Aorta (tissue), 5 donors: ENCODE measurements at regions of chr4 and their contacts with region 1.

Region 1: GRCh38 chr4:170675568-170676262 is 586.0 kb upstream of the AADAT start:
- DNase-seq: no peak
- ATAC-seq: no peak
- H3K4me3 ChIP-seq: no peak overlapping the region
- H3K27ac ChIP-seq: no peak overlapping the region
- H3K4me1 ChIP-seq: peaks cover 3 to 8% of the 10 kb centered on the region in 2 donors
- H3K27me3 ChIP-seq: no peaks in the 10 kb centered on the region

Region 2: DNA sequence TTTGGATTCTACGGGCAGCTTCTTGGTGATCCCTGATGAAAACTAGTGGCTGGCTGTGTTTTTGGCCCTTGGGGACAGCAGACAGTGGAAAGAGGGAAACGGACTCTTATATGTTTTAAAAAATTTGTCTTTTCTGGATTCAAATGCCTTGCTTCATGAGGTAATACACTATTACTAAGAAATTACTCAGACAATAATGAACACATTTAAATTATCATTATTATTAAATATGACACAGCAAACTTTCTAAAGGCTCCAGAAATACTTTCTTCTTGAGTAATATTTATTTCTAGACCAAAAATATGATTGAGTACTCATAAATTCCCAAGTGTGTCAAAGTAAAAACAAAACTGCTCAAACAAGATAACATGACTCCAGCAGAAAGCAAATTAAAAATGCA is 65.3 kb before region 1 on chr4:
- intact Hi-C with region 1: loop called in 1 of 2 experiments (anchors 10 kb)
- DNase-seq: no peak
- ATAC-seq: no peak
- H3K4me3 ChIP-seq: no peak overlapping the region
- H3K27ac ChIP-seq: peak overlapping the region in 1 of 2 donors; percentile 57
- H3K4me1 ChIP-seq: peaks cover 0 to 2% of the 10 kb centered on the region in 2 donors
- H3K27me3 ChIP-seq: no peaks in the 10 kb centered on the region

Region 3: GRCh38 chr4:170662250-170662649 is 13.5 kb before region 1 on chr4:
- intact Hi-C with region 1: no loop called
- DNase-seq: no peak
- ATAC-seq: no peak
- H3K4me3 ChIP-seq: no peak overlapping the region
- H3K27ac ChIP-seq: no peak overlapping the region
- H3K4me1 ChIP-seq: peaks cover 0 to 3% of the 10 kb centered on the region in 2 donors
- H3K27me3 ChIP-seq: no peaks in the 10 kb centered on the region